H1 (cell line): ENCODE measurements at regions of chr9 and their contacts with region 1.

Region 1: DNA sequence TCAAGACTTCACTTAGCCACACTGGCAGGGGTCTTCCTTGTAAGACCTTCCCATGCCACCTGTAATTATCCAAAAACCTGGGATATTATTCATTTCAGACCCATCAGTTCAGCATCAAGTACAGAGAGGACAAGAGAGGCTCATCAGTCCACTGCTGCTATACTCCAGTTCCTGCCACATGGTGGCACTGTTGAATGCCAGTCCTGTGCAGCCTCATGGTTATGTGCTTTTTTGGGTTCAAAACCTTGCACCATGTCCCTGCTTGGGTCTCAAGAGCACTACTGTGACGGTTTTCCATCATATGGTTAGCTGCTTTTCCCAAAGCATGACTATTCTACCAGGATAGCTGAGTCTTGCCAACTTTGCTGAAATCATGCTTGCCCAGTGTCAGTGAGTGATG is 8.5 kb downstream of the PTGS1 start:
- DNase-seq: no peak
- H3K4me3 ChIP-seq: no peak overlapping the region
- H3K27ac ChIP-seq: no peak overlapping the region
- H3K4me1 ChIP-seq: peaks cover 12 to 21% (median 16%) of the 10 kb centered on the region in 4 experiments
- H3K27me3 ChIP-seq: peaks cover 0 to 5% (median 0%) of the 10 kb centered on the region in 4 experiments; a peak in 3 of 7 replicates
- CTCF ChIP-seq: peak; percentile 68 to 91 (median 68)
- EP300 ChIP-seq: no peak
- POLR2A ChIP-seq: no peak
- RAD21 ChIP-seq: peak; percentile 72 to 76

Region 2: GRCh38 chr9:122056484-122056883 is 322.9 kb before region 1 on chr9:
- CTCF ChIA-PET with region 1: no interaction called
- POLR2A ChIA-PET with region 1: no interaction called
- DNase-seq: peak in 1 of 2 experiments; percentile 57
- H3K4me3 ChIP-seq: no peak overlapping the region
- H3K27ac ChIP-seq: no peak overlapping the region
- H3K4me1 ChIP-seq: 0 out of 7 replicates have a peak, but pooled peaks cover 0 to 2% (median 0%) of the 10 kb centered on the region in 4 experiments
- H3K27me3 ChIP-seq: no peaks in the 10 kb centered on the region; a peak in 1 of 7 replicates
- CTCF ChIP-seq: no peak
- EP300 ChIP-seq: no peak
- POLR2A ChIP-seq: no peak
- RAD21 ChIP-seq: no peak

Region 3: DNA sequence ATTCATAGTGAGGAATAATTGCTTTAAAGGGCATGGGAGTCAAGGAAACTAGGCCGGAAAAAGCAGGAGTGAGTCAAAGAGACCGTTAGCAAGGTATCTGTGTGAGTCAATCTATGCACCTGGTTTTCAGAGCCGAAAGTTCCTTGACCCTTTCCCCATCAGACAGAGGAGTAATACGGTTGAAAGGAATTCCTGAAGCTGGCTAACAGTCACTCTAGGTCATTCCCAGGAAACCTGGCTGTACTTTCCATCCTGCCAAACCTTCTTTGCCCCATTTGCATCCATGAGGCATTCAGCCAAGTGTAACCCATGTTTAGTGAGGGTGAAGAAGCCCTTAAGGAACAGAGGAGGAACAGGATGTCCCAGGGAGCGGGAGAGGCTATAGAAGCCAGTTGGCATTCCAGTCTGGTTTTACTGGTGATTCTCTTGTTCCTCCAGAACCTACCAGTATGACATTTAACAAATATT is 130.9 kb before region 1 on chr9:
- CTCF ChIA-PET with region 1: no interaction called
- POLR2A ChIA-PET with region 1: no interaction called
- DNase-seq: no peak
- H3K4me3 ChIP-seq: no peak overlapping the region
- H3K27ac ChIP-seq: no peak overlapping the region
- H3K4me1 ChIP-seq: peaks cover 0 to 6% (median 1%) of the 10 kb centered on the region in 4 experiments; a peak in 4 of 7 replicates
- H3K27me3 ChIP-seq: no peaks in the 10 kb centered on the region
- CTCF ChIP-seq: no peak
- EP300 ChIP-seq: no peak
- POLR2A ChIP-seq: no peak
- RAD21 ChIP-seq: no peak

Region 4: GRCh38 chr9:122318284-122318683 is 61.1 kb before region 1 on chr9:
- CTCF ChIA-PET with region 1: no interaction called
- POLR2A ChIA-PET with region 1: no interaction called
- DNase-seq: no peak
- H3K4me3 ChIP-seq: no peak overlapping the region
- H3K27ac ChIP-seq: no peak overlapping the region
- H3K4me1 ChIP-seq: no peaks in the 10 kb centered on the region
- H3K27me3 ChIP-seq: no peaks in the 10 kb centered on the region
- CTCF ChIP-seq: no peak
- EP300 ChIP-seq: no peak
- POLR2A ChIP-seq: no peak
- RAD21 ChIP-seq: no peak

Region 5: DNA sequence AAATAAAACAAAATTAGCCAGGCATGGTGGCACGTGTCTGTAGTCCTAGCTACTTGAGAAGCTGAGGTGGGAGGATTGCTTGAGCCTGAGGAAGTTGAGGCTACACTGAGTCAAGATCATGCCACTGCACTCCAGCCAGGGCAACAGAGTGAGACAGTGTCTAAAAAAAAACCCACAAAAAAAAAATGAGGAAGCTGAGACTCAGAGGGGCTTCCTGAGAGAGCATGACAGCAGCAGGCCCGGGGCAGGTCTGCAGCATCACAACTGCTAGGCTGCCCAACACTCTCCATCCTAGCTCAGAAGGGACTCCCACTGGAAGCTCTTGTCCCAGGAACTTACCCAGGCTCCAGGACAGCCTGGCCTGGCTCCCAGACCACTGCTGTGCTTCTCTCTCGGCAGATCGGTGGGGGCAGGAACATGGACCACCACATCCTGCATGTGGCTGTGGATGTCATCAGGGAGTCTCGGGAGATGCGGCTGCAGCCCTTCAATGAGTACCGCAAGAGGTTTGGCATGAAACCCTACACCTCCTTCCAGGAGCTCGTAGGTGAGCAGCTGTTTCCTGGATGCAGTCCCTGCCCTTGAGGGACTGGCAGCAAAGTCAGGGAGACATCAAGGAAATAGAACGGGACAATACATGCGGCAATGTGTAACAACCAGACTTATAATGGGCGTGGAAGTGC is 10.6 kb after region 1 on chr9:
- CTCF ChIA-PET with region 1: interaction called, 43 read pairs
- POLR2A ChIA-PET with region 1: no interaction called
- DNase-seq: no peak
- H3K4me3 ChIP-seq: no peak overlapping the region
- H3K27ac ChIP-seq: no peak overlapping the region
- H3K4me1 ChIP-seq: peaks cover 0 to 4% (median under 1%) of the 10 kb centered on the region in 4 experiments; a peak in 3 of 7 replicates
- H3K27me3 ChIP-seq: no peaks in the 10 kb centered on the region; a peak in 1 of 7 replicates
- CTCF ChIP-seq: no peak
- EP300 ChIP-seq: no peak
- POLR2A ChIP-seq: no peak
- RAD21 ChIP-seq: no peak

Region 6: DNA sequence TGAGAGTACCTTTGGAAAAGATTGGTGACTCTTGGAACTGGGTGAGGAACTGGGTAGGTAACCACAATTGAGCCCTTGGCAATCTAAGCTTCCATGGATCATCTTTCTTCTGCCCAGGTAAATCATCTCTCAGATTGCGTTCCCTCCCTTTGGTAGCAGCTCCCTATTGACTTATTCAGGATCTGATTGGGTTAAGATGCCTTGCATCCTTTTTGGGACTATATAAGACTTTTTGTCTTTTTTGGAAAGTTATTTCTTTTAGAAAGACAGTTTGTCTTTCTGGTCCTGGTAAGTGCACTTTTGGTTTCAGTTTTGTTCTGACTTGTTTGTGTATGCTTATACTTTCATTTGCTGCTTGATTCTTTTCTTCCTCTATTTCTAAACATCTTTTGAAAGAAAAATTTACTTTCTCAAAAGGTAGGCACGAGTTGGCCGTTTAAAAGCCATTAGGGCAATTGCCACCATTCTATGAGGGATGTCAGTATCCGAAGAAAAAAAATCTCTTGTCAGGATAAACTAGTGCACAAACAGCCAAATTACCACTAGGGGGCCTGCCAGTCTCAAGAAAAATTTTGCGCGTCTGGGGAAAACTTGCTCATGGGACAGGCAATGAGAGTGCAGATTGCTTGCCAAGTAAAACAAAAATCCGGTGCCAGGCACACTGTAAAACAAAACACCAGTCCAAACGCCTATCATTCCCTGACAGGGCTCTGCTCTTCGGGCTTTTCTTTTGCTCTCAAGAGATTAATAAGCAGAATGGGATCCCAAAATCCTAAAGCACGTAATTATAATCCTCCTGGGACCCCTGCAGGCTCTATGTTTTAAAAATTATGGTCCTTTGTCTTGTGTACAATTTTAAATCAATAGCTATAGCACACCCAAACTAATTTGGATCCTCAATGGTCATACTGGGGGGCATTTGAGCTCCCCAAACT is 85.6 kb after region 1 on chr9:
- CTCF ChIA-PET with region 1: interaction called, 12 read pairs
- POLR2A ChIA-PET with region 1: no interaction called
- DNase-seq: peak; percentile 31 to 54
- H3K4me3 ChIP-seq: no peak overlapping the region
- H3K27ac ChIP-seq: no peak overlapping the region
- H3K4me1 ChIP-seq: no peaks in the 10 kb centered on the region; a peak in 1 of 7 replicates
- H3K27me3 ChIP-seq: no peaks in the 10 kb centered on the region; a peak in 1 of 7 replicates
- CTCF ChIP-seq: peak; percentile 28 to 74 (median 71)
- EP300 ChIP-seq: no peak
- POLR2A ChIP-seq: no peak
- RAD21 ChIP-seq: peak; percentile 80 to 85